AG04450 (cell line): ENCODE measurements at regions of chr2 and their contacts with region 1.

Region 1: DNA sequence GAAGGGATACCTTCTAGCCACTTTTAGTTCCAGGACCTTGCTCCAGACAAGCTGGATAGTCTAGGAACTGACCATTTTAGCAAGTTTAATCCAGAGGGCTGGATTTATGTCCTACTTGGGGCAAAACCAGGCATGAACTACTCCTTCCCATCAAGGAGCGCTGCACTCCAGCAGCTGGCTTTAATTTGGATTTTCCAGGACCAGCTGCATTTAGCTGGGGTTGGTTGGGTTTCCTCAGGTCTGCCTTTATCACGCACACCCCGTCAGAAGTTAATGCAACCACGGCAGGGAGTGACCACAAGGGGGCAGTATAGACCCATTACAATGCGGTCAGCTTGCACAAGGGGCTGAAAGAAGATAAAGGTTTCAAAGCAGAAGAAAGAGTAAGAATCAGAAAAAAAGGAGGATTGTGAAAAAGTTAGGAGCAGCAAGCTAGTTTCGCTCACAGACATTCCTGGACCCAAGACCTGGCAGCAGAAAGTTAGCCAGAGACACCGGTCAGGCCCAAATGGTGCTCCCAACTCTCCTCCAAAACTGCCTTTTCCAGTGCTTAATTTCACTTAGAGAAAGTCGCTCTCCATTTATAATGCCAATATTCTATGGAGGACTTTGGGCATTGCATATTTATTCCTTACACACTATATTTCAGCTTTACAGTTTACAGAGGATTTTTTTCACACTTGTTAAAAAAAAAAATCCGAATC is 40.1 kb downstream of the SLC4A1AP start:
- DNase-seq: peak; percentile 94
- H3K4me3 ChIP-seq: no peak overlapping the region
- H3K27ac ChIP-seq: peak overlapping the region; percentile 61
- H3K27me3 ChIP-seq: no peaks in the 10 kb centered on the region
- CTCF ChIP-seq: peak; percentile 90

Region 2: GRCh38 chr2:28413142-28413898 is 709.5 kb after region 1 on chr2:
- CTCF ChIA-PET with region 1: interaction called, 13 read pairs
- POLR2A ChIA-PET with region 1: interaction called, 3 read pairs
- DNase-seq: no peak
- H3K4me3 ChIP-seq: no peak overlapping the region
- H3K27ac ChIP-seq: peak overlapping the region; percentile 61
- H3K27me3 ChIP-seq: no peaks in the 10 kb centered on the region
- CTCF ChIP-seq: peak; percentile 21; the same call in 1 of the 2 replicates

Region 3: GRCh38 chr2:28452534-28453081 is 748.8 kb after region 1 on chr2:
- CTCF ChIA-PET with region 1: interaction called, 14 read pairs
- POLR2A ChIA-PET with region 1: no interaction called
- DNase-seq: no peak
- H3K4me3 ChIP-seq: no peak overlapping the region
- H3K27ac ChIP-seq: no peak overlapping the region
- H3K27me3 ChIP-seq: no peaks in the 10 kb centered on the region
- CTCF ChIP-seq: peak; percentile 90